ENCODE measurements at regions of chr11 and their contacts with region 1.

Region 1: DNA sequence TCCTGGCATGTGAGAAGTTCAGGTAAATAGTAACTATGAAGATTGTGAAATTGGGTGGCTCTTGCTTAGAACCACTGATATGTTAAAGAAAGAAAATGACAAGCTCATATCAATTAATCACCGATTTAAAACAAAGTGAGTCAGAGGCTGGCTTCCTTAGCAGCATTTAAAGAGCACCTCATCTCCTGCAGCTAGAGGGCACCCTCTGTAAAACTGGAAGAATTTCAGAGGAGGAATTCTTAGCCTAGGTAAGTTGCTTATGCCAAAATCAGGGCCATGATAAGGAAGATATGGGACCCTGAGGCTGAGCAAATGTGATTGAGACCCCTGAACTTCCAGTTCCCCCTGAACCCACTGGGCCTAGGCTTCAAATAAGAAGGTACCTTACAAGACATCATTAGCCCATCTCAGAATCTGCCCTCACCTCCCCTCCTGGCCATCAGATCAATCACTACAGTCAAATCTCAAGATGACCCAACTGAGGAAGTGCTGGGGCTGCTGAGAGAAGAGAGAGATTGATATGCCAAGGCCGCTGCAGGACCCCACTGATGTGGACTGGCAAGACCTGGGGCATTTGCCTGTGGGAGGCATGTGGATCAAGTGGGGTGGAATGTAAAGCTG is 8.6 kb upstream of the CD3E start:
- DNase-seq: peak; percentile 63
- H3K4me3 Mint-ChIP-seq: peak overlapping the region; percentile 22
- H3K27ac Mint-ChIP-seq: peak overlapping the region; percentile 61
- H3K4me1 Mint-ChIP-seq: peaks cover 17% of the 10 kb centered on the region
- H3K27me3 Mint-ChIP-seq: no peaks in the 10 kb centered on the region

Region 2: GRCh38 chr11:118171269-118172062 is 124.5 kb before region 1 on chr11:
- CTCF ChIA-PET with region 1: interaction called, 10 read pairs
- POLR2A ChIA-PET with region 1: interaction called, 3 read pairs
- intact Hi-C with region 1: no loop called
- DNase-seq: peak; percentile 81
- H3K4me3 Mint-ChIP-seq: no peak overlapping the region
- H3K27ac Mint-ChIP-seq: no peak overlapping the region
- H3K4me1 Mint-ChIP-seq: no peaks in the 10 kb centered on the region
- H3K27me3 Mint-ChIP-seq: peaks cover 9% of the 10 kb centered on the region

Region 3: GRCh38 chr11:118258410-118258809 is 37.5 kb before region 1 on chr11:
- CTCF ChIA-PET with region 1: interaction called, 27 read pairs
- POLR2A ChIA-PET with region 1: interaction called, 4 read pairs
- intact Hi-C with region 1: no loop called
- DNase-seq: no peak
- H3K4me3 Mint-ChIP-seq: no peak overlapping the region
- H3K27ac Mint-ChIP-seq: no peak overlapping the region
- H3K4me1 Mint-ChIP-seq: peaks cover 22% of the 10 kb centered on the region
- H3K27me3 Mint-ChIP-seq: no peaks in the 10 kb centered on the region

Region 4: DNA sequence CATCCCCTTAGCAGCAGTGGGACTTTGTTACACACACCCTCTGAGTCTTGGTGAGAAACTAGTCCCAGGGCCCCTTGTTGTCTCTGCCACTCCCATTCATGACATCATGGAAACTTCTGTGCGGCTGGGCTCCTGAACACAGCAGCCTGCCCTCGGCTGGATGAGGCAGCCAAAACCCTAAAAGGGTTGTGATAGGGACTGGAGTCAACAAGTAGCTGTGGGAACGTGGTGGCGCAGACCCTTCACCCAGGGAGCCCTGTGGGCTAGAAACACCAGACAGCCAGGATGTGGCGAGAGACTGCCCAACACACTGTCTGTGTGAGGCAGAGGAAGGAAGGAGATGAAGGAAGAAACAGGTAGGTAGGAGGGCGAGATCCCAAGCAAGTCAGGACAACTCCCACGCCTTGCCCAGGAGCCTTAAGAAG is 42.7 kb after region 1 on chr11:
- CTCF ChIA-PET with region 1: interaction called, 29 read pairs
- POLR2A ChIA-PET with region 1: interaction called, 3 read pairs
- intact Hi-C with region 1: no loop called
- DNase-seq: peak; percentile 95
- H3K4me3 Mint-ChIP-seq: peak overlapping the region; percentile 82
- H3K27ac Mint-ChIP-seq: peak overlapping the region; percentile 98
- H3K4me1 Mint-ChIP-seq: peaks cover 48% of the 10 kb centered on the region
- H3K27me3 Mint-ChIP-seq: no peaks in the 10 kb centered on the region

Region 5: DNA sequence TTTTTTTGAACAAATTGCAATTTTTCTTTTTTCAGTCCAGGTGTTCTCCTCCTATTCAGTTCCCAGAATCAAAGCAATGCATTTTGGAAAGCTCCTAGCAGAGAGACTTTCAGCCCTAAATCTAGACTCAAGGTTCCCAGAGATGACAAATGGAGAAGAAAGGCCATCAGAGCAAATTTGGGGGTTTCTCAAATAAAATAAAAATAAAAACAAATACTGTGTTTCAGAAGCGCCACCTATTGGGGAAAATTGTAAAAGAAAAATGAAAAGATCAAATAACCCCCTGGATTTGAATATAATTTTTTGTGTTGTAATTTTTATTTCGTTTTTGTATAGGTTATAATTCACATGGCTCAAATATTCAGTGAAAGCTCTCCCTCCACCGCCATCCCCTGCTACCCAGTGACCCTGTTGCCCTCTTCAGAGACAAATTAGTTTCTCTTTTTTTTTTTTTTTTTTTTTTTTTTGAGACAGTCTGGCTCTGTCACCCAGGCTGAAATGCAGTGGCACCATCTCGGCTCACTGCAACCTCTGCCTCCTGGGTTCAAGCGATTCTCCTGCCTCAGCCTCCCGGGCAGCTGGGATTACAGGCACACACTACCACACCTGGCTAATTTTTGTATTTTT is 57.3 kb after region 1 on chr11:
- CTCF ChIA-PET with region 1: interaction called, 34 read pairs
- POLR2A ChIA-PET with region 1: interaction called, 3 read pairs
- intact Hi-C with region 1: no loop called
- DNase-seq: no peak
- H3K4me3 Mint-ChIP-seq: no peak overlapping the region
- H3K27ac Mint-ChIP-seq: peak overlapping the region; percentile 71
- H3K4me1 Mint-ChIP-seq: peaks cover 23% of the 10 kb centered on the region
- H3K27me3 Mint-ChIP-seq: no peaks in the 10 kb centered on the region

Region 6: GRCh38 chr11:118488480-118489109 is 192.7 kb after region 1 on chr11:
- CTCF ChIA-PET with region 1: interaction called, 3 read pairs
- POLR2A ChIA-PET with region 1: no interaction called
- intact Hi-C with region 1: loop called (anchors 5 kb)
- DNase-seq: peak; percentile 86
- H3K4me3 Mint-ChIP-seq: no peak overlapping the region
- H3K27ac Mint-ChIP-seq: no peak overlapping the region
- H3K4me1 Mint-ChIP-seq: peaks cover 5% of the 10 kb centered on the region
- H3K27me3 Mint-ChIP-seq: no peaks in the 10 kb centered on the region